ENCODE measurements at regions of chr11 and their contacts with region 1.

Region 1: GRCh38 chr11:60455531-60456042 is at the start of gene MS4A1:
- DNase-seq: peak; percentile 95
- ATAC-seq: peak; percentile 83
- H3K4me3 ChIP-seq: peak within 1 kb of the TSS; percentile 63 to 96 (median 74)
- H3K4me3 Mint-ChIP-seq: peak within 1 kb of the TSS; percentile 90
- H3K27ac ChIP-seq: peak within 1 kb of the TSS; percentile 93 to 98
- H3K27ac Mint-ChIP-seq: peak within 1 kb of the TSS; percentile 99
- H3K4me1 ChIP-seq: peaks cover 44% of the 10 kb centered on the region in 2 donors
- H3K4me1 Mint-ChIP-seq: peaks cover 65% of the 10 kb centered on the region
- H3K27me3 ChIP-seq: no peaks in the 10 kb centered on the region
- H3K27me3 Mint-ChIP-seq: no peaks in the 10 kb centered on the region
- CTCF ChIP-seq: no peak
- total RNA-seq, gene MS4A1: 1,202 and 1,215 TPM in 2 replicates

Region 2: GRCh38 chr11:60310407-60311279 is 144.9 kb before region 1 on chr11:
- CTCF ChIA-PET with region 1: no interaction called
- POLR2A ChIA-PET with region 1: interaction called, 4 read pairs
- intact Hi-C with region 1: loop called (anchors 1 kb)
- DNase-seq: peak; percentile 84
- ATAC-seq: peak; percentile 73
- H3K4me3 ChIP-seq: no peak overlapping the region
- H3K4me3 Mint-ChIP-seq: peak overlapping the region; percentile 27
- H3K27ac ChIP-seq: peak overlapping the region; percentile 21 to 61
- H3K27ac Mint-ChIP-seq: peak overlapping the region; percentile 73
- H3K4me1 ChIP-seq: peaks cover 8 to 9% of the 10 kb centered on the region in 2 donors
- H3K4me1 Mint-ChIP-seq: peaks cover 33% of the 10 kb centered on the region
- H3K27me3 ChIP-seq: no peaks in the 10 kb centered on the region
- H3K27me3 Mint-ChIP-seq: no peaks in the 10 kb centered on the region
- CTCF ChIP-seq: no peak

Region 3: DNA sequence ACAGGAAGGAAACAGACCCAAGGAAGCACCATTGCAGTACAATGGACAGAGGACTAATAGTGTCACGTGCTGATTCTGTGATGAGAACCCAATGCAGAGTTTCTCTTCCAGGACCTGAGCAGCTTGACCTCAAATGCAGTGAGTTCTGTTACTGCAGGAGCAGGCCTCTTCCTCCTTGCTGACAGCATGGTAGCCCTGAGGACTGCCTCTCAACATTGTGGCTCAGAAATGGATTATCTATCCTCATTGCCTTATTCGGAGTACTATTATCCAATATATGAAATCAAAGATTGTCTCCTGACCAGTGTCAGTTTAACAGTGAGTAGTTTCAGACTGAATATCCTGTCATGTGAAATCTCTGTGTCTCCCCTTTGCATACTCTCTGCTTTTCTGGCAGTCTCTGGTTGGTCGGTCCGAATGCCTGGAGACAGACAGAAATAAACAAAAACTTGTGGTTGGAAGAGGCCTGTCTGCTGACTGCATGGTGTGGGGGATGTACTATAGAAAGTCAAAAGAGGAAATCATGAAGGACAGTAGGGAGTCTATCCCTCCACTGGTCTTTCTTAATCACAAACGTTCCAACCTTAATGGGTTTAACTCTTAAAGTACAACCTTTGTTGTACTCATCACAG is 66.2 kb before region 1 on chr11:
- CTCF ChIA-PET with region 1: interaction called, 3 read pairs
- POLR2A ChIA-PET with region 1: no interaction called
- intact Hi-C with region 1: loop called (anchors 1 kb)
- DNase-seq: peak; percentile 90
- ATAC-seq: peak; percentile 89
- H3K4me3 ChIP-seq: peak overlapping the region in 2 of 5 experiments; percentile 2 to 23
- H3K4me3 Mint-ChIP-seq: peak overlapping the region; percentile 68
- H3K27ac ChIP-seq: peak overlapping the region; percentile 82 to 96
- H3K27ac Mint-ChIP-seq: peak overlapping the region; percentile 93
- H3K4me1 ChIP-seq: peaks cover 34 to 36% of the 10 kb centered on the region in 2 donors
- H3K4me1 Mint-ChIP-seq: peaks cover 50% of the 10 kb centered on the region
- H3K27me3 ChIP-seq: no peaks in the 10 kb centered on the region
- H3K27me3 Mint-ChIP-seq: no peaks in the 10 kb centered on the region
- CTCF ChIP-seq: no peak

Region 4: DNA sequence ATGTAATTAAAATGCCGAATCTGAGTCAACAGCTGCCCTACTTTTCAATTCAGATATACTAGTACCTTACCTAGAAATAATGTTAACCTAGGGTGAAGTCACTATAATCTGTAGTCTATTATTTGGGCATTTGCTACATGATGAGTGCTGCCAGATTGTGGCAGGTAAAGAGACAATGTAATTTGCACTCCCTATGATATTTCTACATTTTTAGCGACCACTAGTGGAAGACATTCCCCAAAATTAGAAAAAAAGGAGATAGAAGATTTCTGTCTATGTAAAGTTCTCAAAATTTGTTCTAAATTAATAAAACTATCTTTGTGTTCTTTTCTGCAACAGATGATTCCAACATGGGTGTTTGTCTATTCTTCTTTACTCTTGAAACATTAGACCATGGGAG is 14.1 kb after region 1 on chr11:
- CTCF ChIA-PET with region 1: interaction called, 19 read pairs
- POLR2A ChIA-PET with region 1: interaction called, 11 read pairs
- intact Hi-C with region 1: loop called (anchors 1 kb)
- DNase-seq: no peak
- ATAC-seq: no peak
- H3K4me3 ChIP-seq: no peak overlapping the region
- H3K4me3 Mint-ChIP-seq: no peak overlapping the region
- H3K27ac ChIP-seq: peak overlapping the region in 1 of 2 donors; percentile 93
- H3K27ac Mint-ChIP-seq: peak overlapping the region; percentile 54
- H3K4me1 ChIP-seq: peaks cover 10 to 24% of the 10 kb centered on the region in 2 donors
- H3K4me1 Mint-ChIP-seq: peaks cover 65% of the 10 kb centered on the region
- H3K27me3 ChIP-seq: no peaks in the 10 kb centered on the region
- H3K27me3 Mint-ChIP-seq: no peaks in the 10 kb centered on the region
- CTCF ChIP-seq: no peak

Region 5: DNA sequence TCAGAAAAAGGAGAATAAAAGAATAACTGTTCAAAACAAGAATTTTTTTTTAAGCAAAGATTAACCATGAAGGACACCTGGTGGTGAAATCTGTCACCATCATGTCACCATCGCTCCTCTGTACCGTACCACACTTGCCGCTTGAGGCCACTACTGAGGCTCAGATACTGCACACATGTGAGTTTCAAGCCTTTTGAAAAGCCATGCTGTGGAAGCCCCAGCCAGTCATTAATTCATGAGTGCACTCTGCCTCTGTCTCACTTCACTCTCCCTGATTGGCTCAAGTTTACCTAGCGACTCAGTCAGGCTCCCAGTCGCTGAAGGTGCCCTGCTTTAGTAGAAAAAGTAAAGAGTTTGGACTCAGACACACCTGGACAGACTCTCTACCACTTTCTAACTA is 30.4 kb after region 1 on chr11:
- CTCF ChIA-PET with region 1: interaction called, 53 read pairs
- POLR2A ChIA-PET with region 1: interaction called, 10 read pairs
- intact Hi-C with region 1: loop called (anchors 1 kb)
- DNase-seq: peak; percentile 88
- ATAC-seq: peak; percentile 93
- H3K4me3 ChIP-seq: no peak overlapping the region
- H3K4me3 Mint-ChIP-seq: no peak overlapping the region
- H3K27ac ChIP-seq: no peak overlapping the region
- H3K27ac Mint-ChIP-seq: peak overlapping the region; percentile 4
- H3K4me1 ChIP-seq: peaks cover 39 to 47% of the 10 kb centered on the region in 2 donors
- H3K4me1 Mint-ChIP-seq: peaks cover 54% of the 10 kb centered on the region
- H3K27me3 ChIP-seq: no peaks in the 10 kb centered on the region
- H3K27me3 Mint-ChIP-seq: no peaks in the 10 kb centered on the region
- CTCF ChIP-seq: peak; percentile 96